Endothelial cell of umbilical vein (primary cell): ENCODE measurements at regions of chr1 and their contacts with region 1.

Region 1: DNA sequence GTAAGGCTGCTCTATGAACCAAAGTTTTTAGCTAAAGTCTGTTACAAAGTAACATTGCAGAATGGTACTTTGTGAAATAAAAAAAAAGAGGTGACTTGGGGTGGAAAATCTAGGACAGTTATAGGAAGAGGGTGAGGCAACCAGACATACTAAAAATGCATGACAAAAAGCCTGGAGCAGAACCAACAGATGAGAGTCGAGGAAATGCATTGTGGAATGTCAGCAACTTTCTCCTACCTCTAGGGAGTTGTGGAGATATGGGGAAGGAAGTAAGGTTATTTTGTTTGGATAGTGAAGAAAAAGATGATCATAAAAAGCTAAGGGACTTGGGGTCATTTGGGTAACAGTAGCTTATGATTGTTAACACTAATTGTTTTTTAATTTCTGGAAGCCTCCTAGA is 295.6 kb downstream of the S1PR1 start:
- DNase-seq: no peak
- H3K4me3 ChIP-seq: no peak overlapping the region
- H3K27ac ChIP-seq: no peak overlapping the region
- H3K4me1 ChIP-seq: no peaks in the 10 kb centered on the region
- H3K27me3 ChIP-seq: peaks cover 0 to 5% of the 10 kb centered on the region in 2 experiments
- CTCF ChIP-seq: no peak
- POLR2A ChIP-seq: no peak

Region 2: GRCh38 chr1:100834777-100835660 is 697.4 kb before region 1 on chr1:
- CTCF ChIA-PET with region 1: no interaction called
- POLR2A ChIA-PET with region 1: no interaction called
- dilution Hi-C with region 1: no loop called
- intact Hi-C with region 1: no loop called
- DNase-seq: peak; percentile 26
- H3K4me3 ChIP-seq: no peak overlapping the region
- H3K27ac ChIP-seq: peak overlapping the region; percentile 95
- H3K4me1 ChIP-seq: peaks cover 22% of the 10 kb centered on the region
- H3K27me3 ChIP-seq: no peaks in the 10 kb centered on the region
- CTCF ChIP-seq: peak in 1 of 2 donors; percentile 13
- POLR2A ChIP-seq: no peak

Region 3: GRCh38 chr1:101550581-101550980 is 18.2 kb after region 1 on chr1:
- CTCF ChIA-PET with region 1: no interaction called
- POLR2A ChIA-PET with region 1: no interaction called
- dilution Hi-C with region 1: no loop called
- intact Hi-C with region 1: no loop called
- DNase-seq: no peak
- H3K4me3 ChIP-seq: no peak overlapping the region
- H3K27ac ChIP-seq: no peak overlapping the region
- H3K4me1 ChIP-seq: no peaks in the 10 kb centered on the region
- H3K27me3 ChIP-seq: peaks cover 0 to 2% of the 10 kb centered on the region in 2 experiments
- CTCF ChIP-seq: no peak
- POLR2A ChIP-seq: no peak

Region 4: GRCh38 chr1:103243481-103243880 is 1711.1 kb after region 1 on chr1:
- CTCF ChIA-PET with region 1: no interaction called
- POLR2A ChIA-PET with region 1: no interaction called
- dilution Hi-C with region 1: no loop called
- intact Hi-C with region 1: loop called (anchors 5 kb)
- DNase-seq: no peak
- H3K4me3 ChIP-seq: no peak overlapping the region
- H3K27ac ChIP-seq: no peak overlapping the region
- H3K4me1 ChIP-seq: no peaks in the 10 kb centered on the region
- H3K27me3 ChIP-seq: no peaks in the 10 kb centered on the region
- CTCF ChIP-seq: no peak
- POLR2A ChIP-seq: no peak